ENCODE measurements at regions of chr1 and their contacts with region 1.

Region 1: GRCh38 chr1:152001391-152002249 is 8.0 kb upstream of the S100A10 start:
- DNase-seq: peak; percentile 88
- H3K4me3 Mint-ChIP-seq: no peak overlapping the region
- H3K27ac Mint-ChIP-seq: no peak overlapping the region
- H3K4me1 Mint-ChIP-seq: peaks cover 10% of the 10 kb centered on the region
- H3K27me3 Mint-ChIP-seq: peaks cover 60% of the 10 kb centered on the region

Region 2: GRCh38 chr1:151888972-151889570 is 112.5 kb before region 1 on chr1:
- CTCF ChIA-PET with region 1: interaction called, 83 read pairs
- DNase-seq: no peak
- H3K4me3 Mint-ChIP-seq: no peak overlapping the region
- H3K27ac Mint-ChIP-seq: no peak overlapping the region
- H3K4me1 Mint-ChIP-seq: peaks cover 14% of the 10 kb centered on the region
- H3K27me3 Mint-ChIP-seq: no peaks in the 10 kb centered on the region

Region 3: DNA sequence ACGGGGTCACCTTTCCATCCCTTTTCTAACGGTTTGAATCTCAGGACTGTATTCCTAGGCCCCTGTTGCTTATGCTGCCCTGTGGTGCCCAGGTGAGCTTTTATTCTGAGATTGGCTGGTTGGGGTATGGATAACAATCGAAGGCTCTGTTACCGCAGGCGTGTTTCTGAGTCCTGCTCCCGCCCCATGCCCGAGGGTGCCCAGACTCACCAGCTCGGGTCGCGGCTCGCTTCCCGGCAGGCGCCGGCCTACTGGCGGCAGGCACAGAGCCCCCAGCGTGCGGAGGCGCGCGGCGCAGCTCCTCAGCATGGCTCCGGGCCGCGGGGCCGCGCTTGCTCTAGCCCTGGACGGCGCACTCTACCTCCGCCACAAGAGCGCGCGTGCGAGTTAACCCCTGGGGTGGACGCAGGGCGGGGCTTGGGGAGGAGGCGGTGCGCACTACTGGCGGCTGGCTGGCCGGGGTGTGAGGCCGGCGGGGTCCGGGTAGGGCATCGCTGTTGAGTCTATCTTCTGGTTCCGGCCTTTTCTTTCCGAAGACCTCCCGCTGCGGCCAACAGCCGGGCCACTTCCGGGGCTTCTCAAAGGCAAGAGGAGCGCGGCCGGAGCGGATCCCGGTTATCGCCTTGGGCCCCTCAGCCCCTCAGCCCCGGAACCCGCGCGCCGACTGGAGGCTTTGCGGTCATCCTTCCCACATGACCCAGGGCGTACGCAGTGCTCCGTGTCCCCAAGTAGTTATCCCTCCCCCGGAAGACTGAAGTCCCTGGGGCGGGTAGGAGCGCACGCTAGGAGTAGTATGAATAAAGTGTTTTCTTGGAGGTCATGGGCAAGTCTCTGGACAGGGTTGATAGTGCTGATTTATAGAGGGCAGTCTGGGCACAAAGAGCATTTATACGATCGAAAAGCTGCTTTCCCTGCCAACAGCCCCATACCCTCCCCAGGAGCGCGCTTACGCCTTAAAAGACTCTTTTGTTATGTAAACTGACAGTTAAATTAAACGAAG is 92.2 kb before region 1 on chr1 and contains the start of gene THEM4:
- CTCF ChIA-PET with region 1: interaction called, 14 read pairs
- DNase-seq: peak; percentile 94
- H3K4me3 Mint-ChIP-seq: peak within 1 kb of the TSS; percentile 82
- H3K27ac Mint-ChIP-seq: peak within 1 kb of the TSS; percentile 84
- H3K4me1 Mint-ChIP-seq: peaks cover 46% of the 10 kb centered on the region
- H3K27me3 Mint-ChIP-seq: peaks cover 4% of the 10 kb centered on the region

Region 4: GRCh38 chr1:151968058-151968457 is 33.6 kb before region 1 on chr1:
- CTCF ChIA-PET with region 1: interaction called, 208 read pairs
- DNase-seq: peak; percentile 66
- H3K4me3 Mint-ChIP-seq: no peak overlapping the region
- H3K27ac Mint-ChIP-seq: no peak overlapping the region
- H3K4me1 Mint-ChIP-seq: peaks cover 25% of the 10 kb centered on the region
- H3K27me3 Mint-ChIP-seq: peaks cover 13% of the 10 kb centered on the region

Region 5: GRCh38 chr1:152013664-152014237 is 12.1 kb after region 1 on chr1:
- CTCF ChIA-PET with region 1: interaction called, 89 read pairs
- DNase-seq: peak; percentile 63
- H3K4me3 Mint-ChIP-seq: no peak overlapping the region
- H3K27ac Mint-ChIP-seq: no peak overlapping the region
- H3K4me1 Mint-ChIP-seq: peaks cover 3% of the 10 kb centered on the region
- H3K27me3 Mint-ChIP-seq: peaks cover 57% of the 10 kb centered on the region

Measured in activated naive CD4-positive, alpha-beta T cell treated with anti-CD3 and anti-CD28 coated beads, Interleukin-2, amount 10 ng/mL, durations not matched to agents 7 days and 5 days (primary cell).